ENCODE measurements at regions of chr6 and their contacts with region 1.

Region 1: GRCh38 chr6:138115877-138116660 is 8.8 kb upstream of the PERP start:
- DNase-seq: peak in 8 of 9 experiments; percentile 9 to 80 (median 41)
- ATAC-seq: peak; percentile 83
- H3K4me3 ChIP-seq: no peak overlapping the region
- H3K4me3 Mint-ChIP-seq: no peak overlapping the region
- H3K27ac ChIP-seq: no peak overlapping the region
- H3K27ac Mint-ChIP-seq: no peak overlapping the region
- H3K4me1 ChIP-seq: no peaks in the 10 kb centered on the region
- H3K4me1 Mint-ChIP-seq: peaks cover 4% of the 10 kb centered on the region
- H3K27me3 ChIP-seq: peaks cover 0 to 6% of the 10 kb centered on the region in 2 experiments
- H3K27me3 Mint-ChIP-seq: peaks cover 25% of the 10 kb centered on the region
- CTCF ChIP-seq: peak; percentile 90

Region 2: GRCh38 chr6:137780447-137781034 is 335.5 kb before region 1 on chr6:
- CTCF ChIA-PET with region 1: no interaction called
- POLR2A ChIA-PET with region 1: no interaction called
- intact Hi-C with region 1: no loop called
- DNase-seq: no peak
- ATAC-seq: no peak
- H3K4me3 ChIP-seq: no peak overlapping the region
- H3K4me3 Mint-ChIP-seq: no peak overlapping the region
- H3K27ac ChIP-seq: no peak overlapping the region
- H3K27ac Mint-ChIP-seq: no peak overlapping the region
- H3K4me1 ChIP-seq: no peaks in the 10 kb centered on the region
- H3K4me1 Mint-ChIP-seq: no peaks in the 10 kb centered on the region
- H3K27me3 ChIP-seq: no peaks in the 10 kb centered on the region
- H3K27me3 Mint-ChIP-seq: no peaks in the 10 kb centered on the region
- CTCF ChIP-seq: no peak

Region 3: DNA sequence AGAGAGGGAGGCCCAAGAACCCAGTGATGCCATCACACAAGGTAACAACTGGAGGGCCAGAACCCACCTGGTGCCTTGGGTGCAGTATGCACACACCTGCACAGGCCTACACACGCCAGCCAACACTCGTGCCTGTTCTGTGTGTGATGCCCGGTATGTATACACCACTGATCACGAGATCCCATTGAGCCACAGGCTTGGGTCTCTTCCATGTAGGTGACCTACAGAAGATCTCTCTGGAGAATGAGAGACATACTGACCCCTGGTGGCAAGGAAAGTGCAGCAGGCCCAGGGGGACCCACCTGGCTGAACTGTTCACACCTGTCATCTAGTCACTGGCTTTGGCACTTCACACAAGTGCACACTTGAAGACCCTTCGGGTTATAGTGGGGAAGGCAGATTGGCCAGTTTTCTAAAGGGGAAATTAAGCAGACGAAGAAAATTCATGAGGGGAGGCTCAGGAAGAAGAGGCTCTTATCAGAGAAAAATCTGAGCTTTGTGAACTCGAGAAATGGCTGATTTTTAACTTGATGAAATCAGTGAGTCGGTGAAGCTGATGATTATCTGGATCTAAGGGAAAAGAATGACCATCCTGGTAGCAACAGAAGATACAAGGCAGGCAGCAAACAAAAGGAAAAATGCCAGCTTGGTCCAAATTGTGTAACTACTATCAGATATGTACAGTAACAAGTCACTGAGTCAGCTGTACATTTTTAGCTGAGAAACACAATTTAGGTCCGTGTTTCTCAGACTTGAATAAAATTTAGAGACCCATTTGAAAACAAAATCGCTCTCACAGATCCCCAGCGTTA is 171.3 kb after region 1 on chr6:
- CTCF ChIA-PET with region 1: interaction called, 49 read pairs
- POLR2A ChIA-PET with region 1: no interaction called
- intact Hi-C with region 1: loop called in 1 of 2 experiments (anchors 1 kb)
- DNase-seq: peak in 8 of 9 experiments; percentile 31 to 59 (median 48)
- ATAC-seq: peak; percentile 46
- H3K4me3 ChIP-seq: no peak overlapping the region
- H3K4me3 Mint-ChIP-seq: no peak overlapping the region
- H3K27ac ChIP-seq: no peak overlapping the region
- H3K27ac Mint-ChIP-seq: no peak overlapping the region
- H3K4me1 ChIP-seq: no peaks in the 10 kb centered on the region
- H3K4me1 Mint-ChIP-seq: no peaks in the 10 kb centered on the region
- H3K27me3 ChIP-seq: no peaks in the 10 kb centered on the region
- H3K27me3 Mint-ChIP-seq: peaks cover 1% of the 10 kb centered on the region
- CTCF ChIP-seq: peak; percentile 47

Region 4: GRCh38 chr6:138410972-138411667 is 295.1 kb after region 1 on chr6:
- CTCF ChIA-PET with region 1: interaction called, 4 read pairs
- POLR2A ChIA-PET with region 1: no interaction called
- intact Hi-C with region 1: loop called in 1 of 2 experiments (anchors 5 kb)
- DNase-seq: no peak
- ATAC-seq: no peak
- H3K4me3 ChIP-seq: no peak overlapping the region
- H3K4me3 Mint-ChIP-seq: no peak overlapping the region
- H3K27ac ChIP-seq: no peak overlapping the region
- H3K27ac Mint-ChIP-seq: peak overlapping the region; percentile 1
- H3K4me1 ChIP-seq: no peaks in the 10 kb centered on the region
- H3K4me1 Mint-ChIP-seq: peaks cover 17% of the 10 kb centered on the region
- H3K27me3 ChIP-seq: no peaks in the 10 kb centered on the region
- H3K27me3 Mint-ChIP-seq: no peaks in the 10 kb centered on the region
- CTCF ChIP-seq: no peak

Region 5: DNA sequence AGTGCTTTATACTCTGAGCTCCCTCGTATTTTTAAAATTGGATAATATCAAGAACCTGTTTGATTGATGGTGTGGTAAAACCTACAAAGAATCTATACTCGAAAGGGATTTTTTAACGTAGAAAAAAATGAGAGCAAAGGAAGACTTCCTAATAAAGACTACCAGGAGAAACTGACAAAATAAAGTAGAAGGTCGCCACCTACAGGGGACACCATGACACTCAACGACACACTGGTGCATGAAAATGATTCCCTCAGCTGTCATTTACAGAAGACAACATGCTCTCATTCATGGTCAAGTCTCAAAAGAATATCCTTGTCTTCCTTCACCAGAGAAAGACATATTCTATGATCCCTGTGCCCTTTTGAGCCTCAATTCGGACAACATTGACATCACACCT is 393.3 kb after region 1 on chr6:
- CTCF ChIA-PET with region 1: interaction called, 68 read pairs
- POLR2A ChIA-PET with region 1: no interaction called
- intact Hi-C with region 1: loop called in 1 of 2 experiments (anchors 1 kb)
- DNase-seq: peak in 6 of 9 experiments; percentile 5 to 59 (median 32)
- ATAC-seq: no peak
- H3K4me3 ChIP-seq: no peak overlapping the region
- H3K4me3 Mint-ChIP-seq: no peak overlapping the region
- H3K27ac ChIP-seq: no peak overlapping the region
- H3K27ac Mint-ChIP-seq: no peak overlapping the region
- H3K4me1 ChIP-seq: no peaks in the 10 kb centered on the region
- H3K4me1 Mint-ChIP-seq: peaks cover 4% of the 10 kb centered on the region
- H3K27me3 ChIP-seq: peaks cover 0 to 2% of the 10 kb centered on the region in 2 experiments
- H3K27me3 Mint-ChIP-seq: no peaks in the 10 kb centered on the region
- CTCF ChIP-seq: peak; percentile 52

Region 6: DNA sequence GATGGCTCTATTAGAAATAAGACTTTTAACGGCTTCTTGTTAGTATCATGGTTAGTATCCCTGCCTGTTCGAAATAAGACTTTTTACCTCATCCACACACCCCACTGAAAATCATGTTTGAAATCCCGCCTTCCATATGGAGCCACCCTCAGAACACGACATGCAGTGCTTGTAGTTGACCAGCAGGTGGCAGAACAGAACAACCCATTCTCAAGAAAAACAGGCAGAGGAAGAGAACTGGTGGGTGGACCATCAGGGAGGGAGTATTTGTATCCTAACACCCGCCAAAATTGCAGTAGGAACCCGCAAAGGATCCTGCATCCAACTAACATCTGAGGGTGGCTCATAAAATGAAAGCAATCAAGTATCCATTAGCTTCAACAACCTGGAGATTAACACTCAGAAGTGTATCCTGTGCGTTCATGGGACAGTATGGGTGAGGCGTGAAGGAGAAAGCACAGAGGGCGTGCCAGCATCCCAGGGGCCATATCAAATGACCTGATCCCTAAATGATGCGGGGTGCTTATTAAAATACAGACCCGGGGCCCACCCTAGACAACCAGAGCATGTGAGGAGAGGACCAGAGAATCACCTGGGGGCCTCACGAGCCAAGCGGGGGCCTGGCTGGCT is 472.9 kb after region 1 on chr6:
- CTCF ChIA-PET with region 1: interaction called, 33 read pairs
- POLR2A ChIA-PET with region 1: no interaction called
- intact Hi-C with region 1: loop called (anchors 1 to 2 kb)
- DNase-seq: peak in 8 of 9 experiments; percentile 24 to 74 (median 50)
- ATAC-seq: peak; percentile 67
- H3K4me3 ChIP-seq: no peak overlapping the region
- H3K4me3 Mint-ChIP-seq: no peak overlapping the region
- H3K27ac ChIP-seq: no peak overlapping the region
- H3K27ac Mint-ChIP-seq: no peak overlapping the region
- H3K4me1 ChIP-seq: peaks cover 10% of the 10 kb centered on the region
- H3K4me1 Mint-ChIP-seq: peaks cover 19% of the 10 kb centered on the region
- H3K27me3 ChIP-seq: no peaks in the 10 kb centered on the region
- H3K27me3 Mint-ChIP-seq: no peaks in the 10 kb centered on the region
- CTCF ChIP-seq: peak; percentile 93